Activated CD4-positive, alpha-beta T cell treated with anti-CD3 and anti-CD28 coated beads, Interleukin-2, amount 10 ng/mL, durations not matched to agents 24 days and 14 days (primary cell): ENCODE measurements at regions of chr4 and their contacts with region 1.

Region 1: GRCh38 chr4:186191200-186192065 is at the start of gene CYP4V2:
- DNase-seq: peak; percentile 98
- H3K4me3 Mint-ChIP-seq: peak within 1 kb of the TSS; percentile 97
- H3K27ac Mint-ChIP-seq: peak within 1 kb of the TSS; percentile 94
- H3K4me1 Mint-ChIP-seq: peaks cover 23% of the 10 kb centered on the region
- H3K27me3 Mint-ChIP-seq: no peaks in the 10 kb centered on the region
- total RNA-seq, gene CYP4V2: 8.7 and 9.7 TPM in 2 replicates

Region 2: DNA sequence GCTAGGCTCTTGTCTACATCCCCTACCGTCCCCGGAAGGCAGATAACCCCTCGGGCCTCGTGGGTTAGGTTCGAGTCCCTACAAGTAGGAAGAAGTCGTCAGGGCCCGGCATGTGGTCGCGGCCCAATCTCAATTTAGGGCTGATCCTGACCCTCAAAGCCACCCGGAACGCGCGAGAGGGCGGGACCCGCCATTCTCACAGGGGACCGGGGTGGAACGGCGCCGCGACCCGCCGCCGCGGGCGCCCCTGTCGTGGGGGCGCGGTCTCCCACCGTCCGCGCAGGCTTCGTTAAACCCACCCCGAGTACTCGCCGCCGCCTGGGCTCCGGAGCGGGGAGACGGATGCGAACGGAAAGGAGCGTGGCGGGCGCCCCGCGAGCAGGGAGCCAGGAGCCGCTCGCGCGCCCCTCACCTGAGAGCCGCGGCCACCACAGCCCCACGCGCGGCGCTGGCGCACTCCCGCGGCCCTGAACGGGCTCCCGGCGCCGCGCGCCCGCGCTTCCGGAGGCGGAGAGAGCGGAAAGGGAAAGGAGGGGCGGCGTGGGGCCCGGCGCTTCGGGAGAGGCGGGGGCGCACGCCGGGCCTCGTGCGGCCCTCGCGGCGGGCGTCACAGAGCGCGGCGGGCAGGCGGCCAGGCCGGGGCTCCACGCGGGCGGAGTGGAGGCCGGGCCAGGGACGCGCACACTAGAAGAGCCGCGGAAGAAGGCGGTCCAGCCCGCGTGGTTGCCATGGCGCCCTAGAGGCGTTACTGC is 987.8 kb before region 1 on chr4 and contains the start of gene CFAP97:
- intact Hi-C with region 1: loop called (anchors 10 kb)
- DNase-seq: peak; percentile 95
- H3K4me3 Mint-ChIP-seq: peak within 1 kb of the TSS; percentile 97
- H3K27ac Mint-ChIP-seq: peak within 1 kb of the TSS; percentile 99
- H3K4me1 Mint-ChIP-seq: peaks cover 36% of the 10 kb centered on the region
- H3K27me3 Mint-ChIP-seq: no peaks in the 10 kb centered on the region
- total RNA-seq, gene CFAP97: 56.6 and 59.3 TPM in 2 replicates

Region 3: DNA sequence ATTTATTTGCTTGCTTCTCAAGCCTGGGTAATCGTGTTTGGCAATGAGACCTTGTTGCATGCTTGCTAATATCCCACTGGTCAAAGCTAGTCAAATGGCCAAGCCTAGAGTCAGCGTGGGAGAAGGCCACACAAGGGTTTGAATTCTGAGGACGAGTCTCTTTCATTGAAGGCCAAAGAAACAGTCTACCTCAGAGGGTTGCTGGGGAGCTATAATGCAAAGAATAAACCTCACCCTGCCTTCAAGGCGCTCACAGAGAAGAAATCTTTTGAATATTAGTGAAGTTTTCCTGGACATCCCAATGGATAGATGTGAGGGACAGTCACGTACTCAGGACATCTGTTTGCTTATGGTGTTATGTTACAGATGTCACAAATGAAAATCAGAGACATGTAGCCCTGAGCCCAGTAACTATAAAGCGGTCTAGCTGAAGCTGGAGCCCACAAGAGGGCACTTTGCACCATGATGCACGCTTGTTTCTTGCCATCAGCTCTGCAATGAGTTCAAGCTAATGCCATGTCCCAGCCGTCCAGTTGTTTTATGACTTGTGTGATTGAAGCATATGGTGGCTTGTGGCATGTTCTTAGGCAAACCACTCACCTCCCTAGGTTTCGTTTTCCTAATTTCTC is 123.6 kb before region 1 on chr4:
- intact Hi-C with region 1: loop called (anchors 5 kb)
- DNase-seq: peak; percentile 67
- H3K4me3 Mint-ChIP-seq: no peak overlapping the region
- H3K27ac Mint-ChIP-seq: no peak overlapping the region
- H3K4me1 Mint-ChIP-seq: peaks cover 11% of the 10 kb centered on the region
- H3K27me3 Mint-ChIP-seq: peaks cover 26% of the 10 kb centered on the region

Region 4: GRCh38 chr4:186118582-186118981 is 72.9 kb before region 1 on chr4:
- intact Hi-C with region 1: no loop called
- DNase-seq: no peak
- H3K4me3 Mint-ChIP-seq: no peak overlapping the region
- H3K27ac Mint-ChIP-seq: no peak overlapping the region
- H3K4me1 Mint-ChIP-seq: no peaks in the 10 kb centered on the region
- H3K27me3 Mint-ChIP-seq: peaks cover 9% of the 10 kb centered on the region

Region 5: GRCh38 chr4:186144142-186144955 is 47.1 kb before region 1 on chr4:
- intact Hi-C with region 1: loop called (anchors 2 kb)
- DNase-seq: peak; percentile 64
- H3K4me3 Mint-ChIP-seq: peak overlapping the region; percentile 82
- H3K27ac Mint-ChIP-seq: peak overlapping the region; percentile 48
- H3K4me1 Mint-ChIP-seq: peaks cover 7% of the 10 kb centered on the region
- H3K27me3 Mint-ChIP-seq: peaks cover 57% of the 10 kb centered on the region

Region 6: GRCh38 chr4:186161138-186161537 is 30.3 kb before region 1 on chr4:
- intact Hi-C with region 1: loop called (anchors 2 kb)
- DNase-seq: peak; percentile 84
- H3K4me3 Mint-ChIP-seq: peak overlapping the region; percentile 61
- H3K27ac Mint-ChIP-seq: peak overlapping the region; percentile 61
- H3K4me1 Mint-ChIP-seq: peaks cover 4% of the 10 kb centered on the region
- H3K27me3 Mint-ChIP-seq: no peaks in the 10 kb centered on the region

Region 7: GRCh38 chr4:186739802-186740434 is 548.5 kb after region 1 on chr4:
- intact Hi-C with region 1: no loop called
- DNase-seq: no peak
- H3K4me3 Mint-ChIP-seq: no peak overlapping the region
- H3K27ac Mint-ChIP-seq: no peak overlapping the region
- H3K4me1 Mint-ChIP-seq: no peaks in the 10 kb centered on the region
- H3K27me3 Mint-ChIP-seq: no peaks in the 10 kb centered on the region